K562 (cell line): ENCODE measurements at regions of chr3 and their contacts with region 1.

Region 1: GRCh38 chr3:33636125-33636850 is 81.8 kb downstream of the CLASP2 start:
- DNase-seq: peak; percentile 33 to 72 (median 40)
- ATAC-seq: peak; percentile 80
- H3K4me3 ChIP-seq: no peak overlapping the region
- H3K27ac ChIP-seq: no peak overlapping the region
- H3K4me1 ChIP-seq: no peaks in the 10 kb centered on the region
- H3K27me3 ChIP-seq: no peaks in the 10 kb centered on the region
- CTCF ChIP-seq: peak; percentile 60 to 83 (median 62); a peak in 5 of 6 replicates
- EP300 ChIP-seq: no peak
- POLR2A ChIP-seq: no peak
- RAD21 ChIP-seq: peak; percentile 91 to 94

Region 2: GRCh38 chr3:33467786-33468185 is 168.5 kb before region 1 on chr3:
- CTCF ChIA-PET with region 1: no interaction called
- POLR2A ChIA-PET with region 1: no interaction called
- in situ Hi-C with region 1: no loop called
- intact Hi-C with region 1: no loop called
- DNase-seq: peak in 1 of 4 experiments; percentile 37
- ATAC-seq: no peak; the same call in 2 of the 3 replicates
- H3K4me3 ChIP-seq: no peak overlapping the region
- H3K27ac ChIP-seq: no peak overlapping the region
- H3K4me1 ChIP-seq: no peaks in the 10 kb centered on the region
- H3K27me3 ChIP-seq: no peaks in the 10 kb centered on the region
- CTCF ChIP-seq: no peak
- EP300 ChIP-seq: no peak
- POLR2A ChIP-seq: no peak
- RAD21 ChIP-seq: no peak

Region 3: DNA sequence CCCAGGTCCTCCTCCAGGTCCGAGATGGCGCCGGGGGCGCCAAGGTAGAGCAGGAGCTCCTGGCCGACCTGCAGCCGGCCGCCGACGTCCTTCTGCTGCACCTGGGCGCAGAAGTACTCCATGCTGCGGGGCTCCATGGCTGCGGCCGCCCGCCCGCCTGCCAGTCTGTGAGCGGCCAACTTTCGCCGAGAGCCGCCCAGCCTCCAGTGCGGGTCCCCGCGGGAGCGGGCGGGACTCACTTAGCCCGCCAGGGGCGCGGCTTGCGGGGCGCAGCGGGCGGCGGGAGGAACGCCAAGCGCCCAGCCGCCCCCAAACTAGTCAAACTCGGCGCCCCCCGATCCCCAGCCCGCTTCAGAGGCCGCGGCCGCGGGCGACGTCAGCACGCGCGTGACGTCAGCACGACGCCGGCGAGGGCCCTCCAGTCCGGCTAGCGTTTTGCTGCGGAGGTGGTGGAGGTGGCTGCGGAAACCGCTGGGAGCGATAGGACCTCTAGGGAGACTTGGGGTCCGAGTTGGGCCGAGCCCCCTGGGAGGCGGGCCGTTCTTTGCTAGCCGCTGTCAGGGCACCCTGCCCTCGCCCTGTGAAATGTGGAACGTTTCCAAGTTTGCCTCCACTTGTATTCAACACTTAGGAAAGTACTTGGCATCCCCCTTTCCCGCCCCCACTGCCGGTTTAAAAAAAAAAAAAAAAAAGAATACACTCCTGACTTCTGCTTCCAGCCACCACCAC is 81.7 kb after region 1 on chr3 and contains the start of gene CLASP2:
- CTCF ChIA-PET with region 1: interaction called, 13 read pairs
- POLR2A ChIA-PET with region 1: interaction called, 3 read pairs
- in situ Hi-C with region 1: loop called (anchors 5 kb)
- intact Hi-C with region 1: loop called (anchors 1 kb)
- DNase-seq: peak; percentile 93 to 96 (median 94)
- ATAC-seq: peak; percentile 92
- H3K4me3 ChIP-seq: peak within 1 kb of the TSS; percentile 75
- H3K27ac ChIP-seq: peak within 1 kb of the TSS; percentile 88
- H3K4me1 ChIP-seq: peaks cover 5 to 14% of the 10 kb centered on the region in 2 experiments; a peak in 4 of 5 replicates
- H3K27me3 ChIP-seq: no peaks in the 10 kb centered on the region
- CTCF ChIP-seq: peak in 1 of 3 experiments; percentile 1; a peak in 1 of 6 replicates
- EP300 ChIP-seq: peak; percentile 40
- POLR2A ChIP-seq: peak; percentile 93
- RAD21 ChIP-seq: 0 out of 4 replicates have a peak, but pooled peaks of 1 of the 2 experiments have one; percentile 8
- polyA plus RNA-seq, gene CLASP2: 13.5 to 17.4 TPM

Region 4: GRCh38 chr3:33773637-33774036 is 137.3 kb after region 1 on chr3:
- CTCF ChIA-PET with region 1: interaction called, 14 read pairs
- POLR2A ChIA-PET with region 1: no interaction called
- in situ Hi-C with region 1: no loop called
- intact Hi-C with region 1: loop called (anchors 2 kb)
- DNase-seq: no peak
- ATAC-seq: no peak; the same call in 2 of the 3 replicates
- H3K4me3 ChIP-seq: no peak overlapping the region
- H3K27ac ChIP-seq: no peak overlapping the region
- H3K4me1 ChIP-seq: peaks cover 0 to 13% of the 10 kb centered on the region in 2 experiments; a peak in 3 of 5 replicates
- H3K27me3 ChIP-seq: no peaks in the 10 kb centered on the region
- CTCF ChIP-seq: no peak
- EP300 ChIP-seq: no peak
- POLR2A ChIP-seq: no peak
- RAD21 ChIP-seq: no peak

Region 5: DNA sequence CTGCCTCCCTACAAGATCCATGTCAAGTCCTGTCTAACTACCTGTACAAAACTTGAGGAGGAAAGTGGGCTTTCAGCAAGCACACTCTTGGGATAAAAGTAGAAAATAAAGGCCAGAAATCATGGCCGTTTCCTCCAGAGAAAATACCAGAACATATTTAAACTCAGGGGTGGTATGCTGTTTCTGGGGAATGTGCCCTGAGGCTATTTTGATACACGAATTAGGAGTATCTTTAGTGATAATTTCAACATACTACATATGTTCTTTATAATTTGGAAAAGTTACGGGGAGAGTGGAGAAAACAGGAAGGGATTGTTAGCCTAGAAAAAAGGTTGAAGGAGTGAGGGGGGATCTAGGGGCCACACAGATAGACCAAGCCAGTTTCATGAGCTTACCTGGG is 143.5 kb after region 1 on chr3:
- CTCF ChIA-PET with region 1: interaction called, 14 read pairs
- POLR2A ChIA-PET with region 1: no interaction called
- in situ Hi-C with region 1: loop called (anchors 5 kb)
- intact Hi-C with region 1: loop called (anchors 2 kb)
- DNase-seq: no peak
- ATAC-seq: no peak
- H3K4me3 ChIP-seq: no peak overlapping the region
- H3K27ac ChIP-seq: no peak overlapping the region
- H3K4me1 ChIP-seq: peaks cover 0 to 13% of the 10 kb centered on the region in 2 experiments; a peak in 2 of 5 replicates
- H3K27me3 ChIP-seq: no peaks in the 10 kb centered on the region
- CTCF ChIP-seq: no peak
- EP300 ChIP-seq: no peak
- POLR2A ChIP-seq: no peak
- RAD21 ChIP-seq: no peak